Activated CD8-positive, alpha-beta T cell treated with anti-CD3 and anti-CD28 coated beads for 36 hours (primary cell): ENCODE measurements at regions of chr13 and their contacts with region 1.

Region 1: DNA sequence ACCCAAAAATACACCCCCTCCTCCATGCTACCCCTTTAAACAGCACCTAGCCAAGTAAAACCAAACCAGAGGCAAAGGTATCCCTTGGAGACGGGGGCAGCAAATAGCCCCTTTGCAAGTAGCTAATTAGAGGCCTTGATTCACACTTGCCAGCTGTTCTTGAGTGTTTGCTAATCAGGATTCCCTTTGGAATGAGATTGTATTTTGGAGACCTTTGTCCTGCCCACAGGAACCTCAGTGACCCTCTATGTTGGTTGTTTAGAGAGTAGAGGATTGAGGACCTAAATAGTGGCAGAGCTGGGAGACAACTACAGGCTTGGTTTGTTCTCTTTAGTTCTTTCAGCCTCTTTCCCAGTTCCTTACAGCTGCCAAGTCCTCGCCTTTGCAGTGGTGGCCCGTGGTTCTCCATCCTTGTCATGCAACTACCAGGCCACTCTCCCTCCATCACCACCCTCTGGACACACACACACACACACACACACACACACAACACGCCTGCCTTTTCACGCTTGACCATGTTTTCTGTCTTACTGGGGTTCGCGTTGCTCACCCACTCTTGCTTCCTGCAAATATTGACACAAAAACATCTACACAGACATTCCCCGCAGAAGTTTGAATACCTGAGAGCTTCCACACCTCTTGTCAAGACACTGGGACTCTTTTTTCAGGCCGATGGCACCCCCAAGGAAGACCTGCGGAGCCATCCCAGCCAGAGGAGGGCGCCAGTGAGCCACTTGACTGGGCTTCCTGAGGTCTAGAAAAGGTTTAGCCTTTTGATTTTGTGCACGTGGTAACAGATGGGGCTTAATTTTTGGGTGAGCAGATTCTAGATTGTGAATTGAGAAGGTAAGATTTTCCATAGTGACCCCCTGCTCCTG is 80.0 kb upstream of the GPR183 start:
- DNase-seq: peak; percentile 92
- ATAC-seq: peak; percentile 50
- H3K4me3 Mint-ChIP-seq: no peak overlapping the region
- H3K27ac Mint-ChIP-seq: peak overlapping the region; percentile 84
- H3K4me1 Mint-ChIP-seq: peaks cover 66% of the 10 kb centered on the region
- H3K27me3 Mint-ChIP-seq: no peaks in the 10 kb centered on the region
- CTCF ChIP-seq: peak; percentile 99

Region 2: GRCh38 chr13:99176309-99177276 is 210.6 kb before region 1 on chr13:
- CTCF ChIA-PET with region 1: interaction called, 17 read pairs
- POLR2A ChIA-PET with region 1: interaction called, 4 read pairs
- intact Hi-C with region 1: no loop called
- DNase-seq: peak; percentile 87
- ATAC-seq: peak; percentile 91
- H3K4me3 Mint-ChIP-seq: peak overlapping the region; percentile 61
- H3K27ac Mint-ChIP-seq: peak overlapping the region; percentile 83
- H3K4me1 Mint-ChIP-seq: peaks cover 38% of the 10 kb centered on the region
- H3K27me3 Mint-ChIP-seq: no peaks in the 10 kb centered on the region
- CTCF ChIP-seq: peak; percentile 95

Region 3: GRCh38 chr13:99322297-99323103 is 64.7 kb before region 1 on chr13:
- CTCF ChIA-PET with region 1: interaction called, 16 read pairs
- POLR2A ChIA-PET with region 1: interaction called, 8 read pairs
- intact Hi-C with region 1: no loop called
- DNase-seq: peak; percentile 70
- ATAC-seq: peak; percentile 78
- H3K4me3 Mint-ChIP-seq: peak overlapping the region; percentile 47
- H3K27ac Mint-ChIP-seq: peak overlapping the region; percentile 94
- H3K4me1 Mint-ChIP-seq: peaks cover 77% of the 10 kb centered on the region
- H3K27me3 Mint-ChIP-seq: no peaks in the 10 kb centered on the region
- CTCF ChIP-seq: no peak

Region 4: DNA sequence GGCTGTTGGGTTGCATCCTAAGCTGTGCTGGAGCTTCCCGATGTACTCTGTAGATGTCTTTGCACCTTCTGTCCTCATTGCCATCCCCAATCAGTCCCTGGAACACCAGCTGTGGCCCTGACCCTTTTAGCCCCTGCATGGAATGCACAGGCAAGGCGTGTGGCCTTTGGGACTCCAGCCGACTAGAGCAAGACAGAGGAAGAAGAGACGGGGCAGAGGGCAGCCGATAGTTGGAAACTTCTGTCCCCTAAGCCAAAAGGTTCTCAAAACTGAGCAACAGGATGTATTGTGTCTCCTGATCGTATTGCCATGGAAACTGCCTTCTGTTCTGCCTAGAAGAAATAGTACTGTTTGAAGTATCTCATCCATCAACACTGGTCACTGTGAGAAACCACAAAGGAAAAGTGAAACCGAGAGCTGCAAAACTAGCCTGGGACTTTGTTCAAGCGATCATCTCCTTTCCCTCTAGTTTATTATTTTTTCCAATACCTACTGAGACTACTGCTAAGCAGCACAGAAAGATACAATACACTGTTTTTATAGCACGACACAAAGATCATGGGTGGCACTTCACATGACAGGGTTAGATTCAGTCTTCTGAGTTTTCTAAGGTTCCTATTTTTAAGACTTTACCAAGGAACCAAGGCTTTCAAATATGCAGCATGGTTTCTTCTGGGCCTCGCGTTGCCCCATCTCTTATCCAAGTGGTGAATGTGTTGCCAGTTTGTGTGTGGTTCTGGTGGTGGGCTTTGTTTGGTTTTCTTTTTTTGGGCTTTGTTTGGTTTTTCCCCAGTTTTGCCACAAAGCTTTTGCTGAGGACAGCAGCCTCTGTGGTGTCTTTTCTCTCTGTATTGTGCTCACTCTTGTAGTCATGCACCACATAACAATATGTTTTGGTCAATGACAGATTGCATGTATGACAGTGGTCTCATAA is 30.7 kb before region 1 on chr13:
- CTCF ChIA-PET with region 1: interaction called, 19 read pairs
- POLR2A ChIA-PET with region 1: interaction called, 26 read pairs
- intact Hi-C with region 1: loop called (anchors 2 kb)
- DNase-seq: peak; percentile 71
- ATAC-seq: peak; percentile 53
- H3K4me3 Mint-ChIP-seq: peak overlapping the region; percentile 56
- H3K27ac Mint-ChIP-seq: peak overlapping the region; percentile 93
- H3K4me1 Mint-ChIP-seq: peaks cover 97% of the 10 kb centered on the region
- H3K27me3 Mint-ChIP-seq: no peaks in the 10 kb centered on the region
- CTCF ChIP-seq: no peak

Region 5: DNA sequence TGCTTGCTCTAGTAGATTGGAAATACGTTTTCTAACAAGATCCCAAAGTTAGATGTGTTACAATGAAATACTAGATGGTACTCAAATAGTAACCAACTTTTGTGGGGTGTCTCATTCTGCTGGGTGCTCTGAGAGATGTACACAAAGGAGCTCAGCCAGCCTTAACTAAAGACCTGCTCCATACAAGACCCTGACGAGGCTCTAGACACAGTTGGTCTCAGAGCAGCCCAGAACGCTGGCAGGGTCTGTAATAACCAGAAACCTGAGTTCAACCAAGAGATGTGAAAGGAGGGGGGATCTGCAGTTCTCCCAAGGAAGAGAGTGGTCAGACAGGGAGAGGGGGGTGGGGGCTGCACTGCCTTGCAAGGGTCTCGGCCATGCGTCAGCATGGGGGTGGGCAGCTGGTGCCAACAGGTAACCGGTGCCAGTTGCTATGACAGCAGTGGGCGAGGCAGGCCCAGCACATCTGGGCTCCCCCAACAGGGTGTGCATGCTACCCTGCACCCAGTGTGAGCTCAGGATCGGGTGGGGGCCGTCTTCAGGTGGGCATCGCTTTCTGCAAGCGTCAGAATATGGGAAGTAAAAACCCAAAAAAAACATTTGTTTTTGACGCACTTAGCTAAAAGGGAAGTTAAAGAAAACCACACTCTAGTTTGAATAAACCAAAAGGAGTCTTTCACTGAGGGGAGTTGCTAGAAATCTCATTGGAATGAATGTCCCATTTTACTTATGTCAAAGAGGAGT is 12.0 kb before region 1 on chr13:
- CTCF ChIA-PET with region 1: interaction called, 19 read pairs
- POLR2A ChIA-PET with region 1: interaction called, 8 read pairs
- intact Hi-C with region 1: no loop called
- DNase-seq: peak; percentile 42
- ATAC-seq: peak; percentile 41
- H3K4me3 Mint-ChIP-seq: no peak overlapping the region
- H3K27ac Mint-ChIP-seq: peak overlapping the region; percentile 81
- H3K4me1 Mint-ChIP-seq: peaks cover 86% of the 10 kb centered on the region
- H3K27me3 Mint-ChIP-seq: no peaks in the 10 kb centered on the region
- CTCF ChIP-seq: no peak

Region 6: GRCh38 chr13:99406799-99407201 is 19.6 kb after region 1 on chr13:
- CTCF ChIA-PET with region 1: interaction called, 73 read pairs
- POLR2A ChIA-PET with region 1: interaction called, 4 read pairs
- intact Hi-C with region 1: no loop called
- DNase-seq: no peak
- ATAC-seq: no peak
- H3K4me3 Mint-ChIP-seq: no peak overlapping the region
- H3K27ac Mint-ChIP-seq: no peak overlapping the region
- H3K4me1 Mint-ChIP-seq: peaks cover 59% of the 10 kb centered on the region
- H3K27me3 Mint-ChIP-seq: no peaks in the 10 kb centered on the region
- CTCF ChIP-seq: no peak

Region 7: DNA sequence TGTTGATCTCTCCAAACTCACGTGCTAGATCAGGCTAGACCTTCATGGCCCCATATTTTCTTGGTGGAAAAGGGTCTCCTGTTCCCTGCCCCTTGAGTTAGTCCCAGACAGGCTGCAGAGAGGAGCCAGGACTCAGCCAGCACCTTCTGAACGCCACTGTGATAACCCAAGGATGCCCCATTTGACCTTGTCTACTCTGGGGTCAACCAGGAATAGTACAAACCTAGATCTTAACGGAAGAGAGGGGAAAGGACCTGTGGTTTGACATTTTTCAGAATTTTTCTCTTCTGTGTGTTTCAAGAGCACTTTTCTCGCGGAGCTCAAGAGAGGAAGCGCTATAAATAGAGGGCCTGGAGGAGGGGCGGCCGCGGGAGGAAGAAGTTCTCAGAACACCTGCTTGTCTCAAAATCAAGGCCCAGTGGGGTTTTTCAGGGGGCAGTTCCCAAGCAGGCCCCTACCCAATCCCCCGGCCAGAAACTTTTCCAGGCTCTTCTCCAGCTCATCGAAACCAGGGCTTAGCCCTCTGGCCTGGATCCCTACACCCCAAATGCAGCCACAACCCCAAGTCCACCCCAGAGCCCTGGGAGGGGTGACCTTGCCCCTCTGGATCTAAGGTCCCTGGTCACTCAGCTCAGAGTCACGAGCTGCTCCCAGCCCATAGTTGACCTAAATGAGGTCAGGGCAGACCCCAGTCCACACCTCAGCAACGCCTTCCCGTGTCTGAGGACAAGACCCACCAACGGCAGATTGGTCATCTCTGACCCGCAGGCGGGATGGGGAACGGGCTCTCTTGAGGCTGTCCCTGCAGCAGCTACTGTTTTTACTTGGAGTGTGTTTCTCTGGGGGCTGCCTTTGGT is 38.6 kb after region 1 on chr13:
- CTCF ChIA-PET with region 1: interaction called, 53 read pairs
- POLR2A ChIA-PET with region 1: interaction called, 6 read pairs
- intact Hi-C with region 1: no loop called
- DNase-seq: peak; percentile 88
- ATAC-seq: peak; percentile 69
- H3K4me3 Mint-ChIP-seq: peak overlapping the region; percentile 73
- H3K27ac Mint-ChIP-seq: peak overlapping the region; percentile 94
- H3K4me1 Mint-ChIP-seq: peaks cover 72% of the 10 kb centered on the region
- H3K27me3 Mint-ChIP-seq: no peaks in the 10 kb centered on the region
- CTCF ChIP-seq: no peak

Region 8: DNA sequence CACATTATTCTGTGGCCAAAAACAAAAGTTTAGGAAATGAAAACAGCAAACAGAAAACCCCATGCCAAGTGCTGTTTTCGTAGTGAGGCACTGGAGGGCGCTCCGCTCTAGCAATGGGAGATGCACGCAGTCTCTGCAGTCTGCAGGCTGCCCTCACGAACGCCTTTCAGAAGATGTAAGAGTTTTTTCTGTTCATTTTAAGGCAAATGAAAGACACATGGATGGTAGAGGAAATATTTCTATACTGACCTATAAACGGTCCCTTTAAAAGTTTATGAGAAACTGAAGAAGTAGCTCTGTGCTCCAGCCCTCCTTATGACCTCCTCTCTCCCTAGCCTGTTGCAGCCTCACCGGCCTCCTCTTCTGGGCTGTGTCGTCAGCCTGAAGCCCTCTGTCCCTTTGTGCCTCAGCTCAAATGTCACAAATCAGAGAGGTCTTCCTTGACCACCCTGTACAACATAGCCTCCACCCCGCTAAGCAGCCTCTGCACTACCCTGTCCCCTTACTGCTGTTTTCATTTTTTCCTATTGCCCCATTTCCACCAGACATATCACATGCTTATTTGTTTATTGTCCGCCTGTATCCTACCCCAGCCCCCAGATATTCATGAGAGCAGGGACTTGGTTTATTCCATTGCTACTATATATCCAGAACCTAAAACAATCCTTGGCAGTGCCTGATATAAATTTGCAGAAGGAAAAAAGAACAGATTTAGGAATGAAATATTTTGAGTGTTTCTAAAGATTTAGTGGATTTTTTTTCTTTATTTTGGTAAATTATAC is 230.5 kb after region 1 on chr13:
- CTCF ChIA-PET with region 1: no interaction called
- POLR2A ChIA-PET with region 1: no interaction called
- intact Hi-C with region 1: no loop called
- DNase-seq: peak; percentile 48
- ATAC-seq: peak; percentile 60
- H3K4me3 Mint-ChIP-seq: no peak overlapping the region
- H3K27ac Mint-ChIP-seq: no peak overlapping the region
- H3K4me1 Mint-ChIP-seq: peaks cover 21% of the 10 kb centered on the region
- H3K27me3 Mint-ChIP-seq: no peaks in the 10 kb centered on the region
- CTCF ChIP-seq: peak; percentile 59